Activated naive CD8-positive, alpha-beta T cell treated with anti-CD3 and anti-CD28 coated beads, Interleukin-2, amount 10 ng/mL, durations not matched to agents 7 days and 5 days (primary cell): ENCODE measurements at regions of chr15 and their contacts with region 1.

Region 1: GRCh38 chr15:92903941-92904831 is 4.1 kb downstream of the CHD2 start:
- DNase-seq: peak; percentile 100
- ATAC-seq: peak; percentile 88
- H3K4me3 Mint-ChIP-seq: peak overlapping the region; percentile 99
- H3K27ac Mint-ChIP-seq: peak overlapping the region; percentile 100
- H3K4me1 Mint-ChIP-seq: peaks cover 52% of the 10 kb centered on the region
- H3K27me3 Mint-ChIP-seq: no peaks in the 10 kb centered on the region

Region 2: DNA sequence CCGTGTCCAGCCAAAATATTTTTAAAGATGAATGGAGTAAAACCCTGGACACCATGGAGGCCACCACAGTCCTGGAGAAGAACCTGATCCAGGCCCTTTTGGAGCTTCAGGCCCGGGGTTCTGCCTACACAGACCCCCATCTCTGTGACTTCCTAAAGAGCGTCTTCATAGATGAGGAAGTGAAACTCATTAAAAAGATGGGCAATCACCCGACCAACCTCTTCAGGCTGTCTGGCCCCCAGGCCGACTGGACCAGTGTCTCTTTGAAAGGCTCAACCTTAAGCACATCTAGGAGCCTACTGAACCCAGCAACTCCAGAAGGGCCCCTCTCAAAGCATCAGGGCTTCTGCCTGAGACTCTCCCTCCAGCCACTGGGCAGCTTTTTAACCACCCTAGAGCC is 140.7 kb before region 1 on chr15:
- POLR2A ChIA-PET with region 1: no interaction called
- DNase-seq: no peak
- ATAC-seq: no peak
- H3K4me3 Mint-ChIP-seq: no peak overlapping the region
- H3K27ac Mint-ChIP-seq: no peak overlapping the region
- H3K4me1 Mint-ChIP-seq: no peaks in the 10 kb centered on the region
- H3K27me3 Mint-ChIP-seq: no peaks in the 10 kb centered on the region

Region 3: DNA sequence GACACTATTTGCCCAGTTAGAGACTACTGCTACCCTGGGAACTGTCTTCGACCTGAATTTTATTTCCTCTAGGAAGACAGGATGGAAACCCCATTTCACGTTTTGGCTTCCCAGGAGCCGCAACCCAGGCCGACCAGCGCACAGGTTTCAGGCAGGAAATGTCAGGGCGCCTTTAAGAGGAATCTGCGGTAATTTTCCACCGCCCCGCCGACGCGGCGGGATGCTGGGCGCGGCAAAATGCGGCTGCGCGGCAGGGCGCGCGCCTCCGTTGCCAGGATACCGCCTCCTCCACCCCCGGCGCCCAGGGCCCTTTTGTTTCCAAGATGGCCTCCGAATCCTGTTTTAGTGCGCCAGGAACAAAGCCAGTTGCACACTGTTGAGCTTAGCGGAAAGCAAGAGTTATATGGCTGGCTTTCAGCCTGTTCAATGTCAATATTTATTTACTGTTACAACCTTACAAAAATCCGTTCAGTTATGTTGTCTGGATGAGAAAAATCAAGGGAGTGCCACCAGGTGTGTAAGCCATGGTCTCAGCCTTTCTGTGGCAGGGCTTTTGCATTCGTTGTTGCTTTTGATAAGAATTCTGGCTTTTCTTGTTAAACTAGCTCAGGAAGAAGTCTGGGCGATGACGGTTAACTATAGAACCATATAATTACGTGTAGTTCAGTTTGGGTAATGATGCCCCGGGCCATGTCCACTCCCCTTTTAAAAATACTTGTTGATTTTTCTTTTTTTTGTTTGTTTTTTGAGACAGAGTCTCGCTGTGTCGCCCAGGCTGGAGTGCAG is 83.8 kb before region 1 on chr15:
- POLR2A ChIA-PET with region 1: interaction called, 19 read pairs
- DNase-seq: peak; percentile 86
- ATAC-seq: peak; percentile 82
- H3K4me3 Mint-ChIP-seq: peak overlapping the region; percentile 87
- H3K27ac Mint-ChIP-seq: peak overlapping the region; percentile 83
- H3K4me1 Mint-ChIP-seq: peaks cover 47% of the 10 kb centered on the region
- H3K27me3 Mint-ChIP-seq: no peaks in the 10 kb centered on the region

Region 4: GRCh38 chr15:92845126-92845508 is 59.1 kb before region 1 on chr15:
- POLR2A ChIA-PET with region 1: interaction called, 11 read pairs
- DNase-seq: no peak
- ATAC-seq: peak; percentile 6
- H3K4me3 Mint-ChIP-seq: peak overlapping the region; percentile 81
- H3K27ac Mint-ChIP-seq: peak overlapping the region; percentile 95
- H3K4me1 Mint-ChIP-seq: peaks cover 50% of the 10 kb centered on the region
- H3K27me3 Mint-ChIP-seq: no peaks in the 10 kb centered on the region

Region 5: GRCh38 chr15:92917606-92918407 is 13.6 kb after region 1 on chr15:
- POLR2A ChIA-PET with region 1: interaction called, 84 read pairs
- DNase-seq: peak; percentile 86
- ATAC-seq: peak; percentile 28
- H3K4me3 Mint-ChIP-seq: peak overlapping the region; percentile 62
- H3K27ac Mint-ChIP-seq: peak overlapping the region; percentile 78
- H3K4me1 Mint-ChIP-seq: peaks cover 73% of the 10 kb centered on the region
- H3K27me3 Mint-ChIP-seq: no peaks in the 10 kb centered on the region